ENCODE measurements at regions of chr14 and their contacts with region 1.

Region 1: DNA sequence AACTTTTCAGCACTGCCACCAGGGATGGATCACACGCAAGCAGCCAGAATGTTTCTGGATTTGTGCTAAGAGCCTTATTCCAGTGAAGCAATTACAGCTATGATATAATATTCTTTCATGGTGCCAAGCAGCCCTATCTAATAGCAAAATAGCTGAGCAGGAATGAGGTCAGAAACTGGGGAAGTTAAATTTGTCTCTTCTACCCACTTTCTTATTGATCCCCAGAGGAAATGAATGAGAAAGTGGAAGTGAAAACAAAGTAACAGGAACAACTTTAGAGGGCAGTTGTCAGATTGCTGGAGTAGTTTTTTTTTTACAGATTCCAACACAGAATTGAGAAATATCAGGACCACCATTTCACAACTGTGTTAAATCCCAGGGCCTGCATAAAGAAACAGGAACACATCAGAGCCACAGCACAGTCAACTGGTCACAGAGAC is 44.8 kb downstream of the GCH1 start:
- DNase-seq: peak; percentile 65
- ATAC-seq: peak; percentile 85
- H3K4me3 ChIP-seq: no peak overlapping the region
- H3K4me3 Mint-ChIP-seq: peak overlapping the region; percentile 26
- H3K27ac ChIP-seq: peak overlapping the region; percentile 2 to 64
- H3K27ac Mint-ChIP-seq: peak overlapping the region; percentile 54
- H3K4me1 ChIP-seq: peaks cover 40 to 42% of the 10 kb centered on the region in 2 donors
- H3K4me1 Mint-ChIP-seq: peaks cover 38% of the 10 kb centered on the region
- H3K27me3 ChIP-seq: no peaks in the 10 kb centered on the region
- H3K27me3 Mint-ChIP-seq: no peaks in the 10 kb centered on the region
- CTCF ChIP-seq: no peak

Region 2: GRCh38 chr14:54839701-54840119 is 18.1 kb before region 1 on chr14:
- CTCF ChIA-PET with region 1: no interaction called
- POLR2A ChIA-PET with region 1: no interaction called
- intact Hi-C with region 1: no loop called
- DNase-seq: no peak
- ATAC-seq: no peak
- H3K4me3 ChIP-seq: no peak overlapping the region
- H3K4me3 Mint-ChIP-seq: no peak overlapping the region
- H3K27ac ChIP-seq: no peak overlapping the region
- H3K27ac Mint-ChIP-seq: no peak overlapping the region
- H3K4me1 ChIP-seq: no peaks in the 10 kb centered on the region
- H3K4me1 Mint-ChIP-seq: no peaks in the 10 kb centered on the region
- H3K27me3 ChIP-seq: no peaks in the 10 kb centered on the region
- H3K27me3 Mint-ChIP-seq: no peaks in the 10 kb centered on the region
- CTCF ChIP-seq: no peak

Region 3: GRCh38 chr14:54881235-54881760 is 23.4 kb after region 1 on chr14:
- CTCF ChIA-PET with region 1: no interaction called
- POLR2A ChIA-PET with region 1: no interaction called
- intact Hi-C with region 1: loop called (anchors 2 kb)
- DNase-seq: peak; percentile 67
- ATAC-seq: peak; percentile 59
- H3K4me3 ChIP-seq: peak overlapping the region; percentile 27 to 76 (median 55)
- H3K4me3 Mint-ChIP-seq: peak overlapping the region; percentile 93
- H3K27ac ChIP-seq: peak overlapping the region; percentile 72 to 89
- H3K27ac Mint-ChIP-seq: peak overlapping the region; percentile 92
- H3K4me1 ChIP-seq: peaks cover 7 to 10% of the 10 kb centered on the region in 2 donors
- H3K4me1 Mint-ChIP-seq: peaks cover 35% of the 10 kb centered on the region
- H3K27me3 ChIP-seq: no peaks in the 10 kb centered on the region
- H3K27me3 Mint-ChIP-seq: no peaks in the 10 kb centered on the region
- CTCF ChIP-seq: no peak

Region 4: DNA sequence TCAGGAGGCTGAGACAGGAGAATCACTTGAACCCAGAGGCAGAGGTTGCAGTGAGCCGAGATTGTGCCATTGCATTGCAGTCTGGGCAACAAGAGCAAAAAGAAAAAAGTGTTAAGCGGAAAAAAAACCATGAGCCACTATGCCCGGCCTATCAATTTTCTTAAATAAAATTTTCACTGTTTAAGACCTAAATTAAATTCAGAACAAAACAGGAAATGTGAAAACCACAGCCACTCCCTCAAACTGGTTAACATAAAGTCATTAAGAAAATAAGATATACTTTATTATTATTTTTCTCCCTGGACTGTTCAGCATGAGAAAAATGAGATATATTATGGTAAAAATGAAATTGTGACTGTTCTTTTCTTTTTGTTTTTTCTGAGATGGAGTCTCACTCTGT is 89.4 kb after region 1 on chr14:
- CTCF ChIA-PET with region 1: no interaction called
- POLR2A ChIA-PET with region 1: no interaction called
- intact Hi-C with region 1: no loop called
- DNase-seq: no peak
- ATAC-seq: no peak
- H3K4me3 ChIP-seq: no peak overlapping the region
- H3K4me3 Mint-ChIP-seq: no peak overlapping the region
- H3K27ac ChIP-seq: no peak overlapping the region
- H3K27ac Mint-ChIP-seq: no peak overlapping the region
- H3K4me1 ChIP-seq: peaks cover 5 to 12% of the 10 kb centered on the region in 2 donors
- H3K4me1 Mint-ChIP-seq: peaks cover 7% of the 10 kb centered on the region
- H3K27me3 ChIP-seq: no peaks in the 10 kb centered on the region
- H3K27me3 Mint-ChIP-seq: no peaks in the 10 kb centered on the region
- CTCF ChIP-seq: no peak

Measured in B cell (primary cell).